Mammary epithelial cell (primary cell): ENCODE measurements at regions of chr10 and their contacts with region 1.

Region 1: DNA sequence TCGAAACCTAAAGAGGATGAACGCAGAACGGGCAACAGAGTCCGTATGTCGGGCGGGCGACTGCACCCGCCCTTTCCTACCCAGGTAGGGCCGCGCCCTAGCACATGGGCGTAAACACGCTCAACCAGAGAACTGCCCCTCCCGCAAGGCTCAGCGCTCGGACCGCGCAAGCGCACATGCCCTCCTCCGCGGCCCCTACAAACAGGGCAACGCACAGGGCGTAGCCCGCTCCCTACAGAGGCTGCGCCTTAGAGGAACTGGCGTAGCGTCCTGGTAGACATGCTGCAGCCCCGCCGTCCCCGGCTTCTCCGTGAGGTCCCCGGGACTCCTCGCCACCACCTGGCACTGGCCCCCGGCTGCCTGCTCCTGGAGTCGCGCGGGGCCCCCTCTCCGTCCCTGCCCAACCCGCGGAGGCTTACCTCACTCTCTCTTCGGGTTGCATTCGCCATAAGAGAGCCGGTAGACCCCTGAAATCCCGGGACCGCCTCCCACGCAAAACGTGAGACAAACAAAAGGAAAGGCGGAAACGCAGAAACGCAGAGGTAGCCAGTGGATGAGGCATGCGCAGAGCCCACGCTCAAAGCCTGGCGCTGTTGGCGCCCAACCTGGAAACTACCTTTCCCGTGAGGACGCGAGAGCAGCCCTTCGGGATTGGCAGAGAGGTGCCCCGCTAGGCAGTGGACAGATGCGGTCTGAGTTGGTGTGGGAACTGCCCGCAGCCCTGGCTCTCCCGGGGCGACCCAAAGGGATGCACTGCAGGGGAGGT is at the start of gene ZNF33B:
- DNase-seq: peak; percentile 97
- H3K4me3 ChIP-seq: peak within 1 kb of the TSS; percentile 72 to 87 (median 84)
- H3K27ac ChIP-seq: peak within 1 kb of the TSS; percentile 90
- H3K4me1 ChIP-seq: no peaks in the 10 kb centered on the region
- H3K27me3 ChIP-seq: no peaks in the 10 kb centered on the region
- CTCF ChIP-seq: no peak
- total RNA-seq, gene ZNF33B: 9.0 to 15.0 TPM

Region 2: DNA sequence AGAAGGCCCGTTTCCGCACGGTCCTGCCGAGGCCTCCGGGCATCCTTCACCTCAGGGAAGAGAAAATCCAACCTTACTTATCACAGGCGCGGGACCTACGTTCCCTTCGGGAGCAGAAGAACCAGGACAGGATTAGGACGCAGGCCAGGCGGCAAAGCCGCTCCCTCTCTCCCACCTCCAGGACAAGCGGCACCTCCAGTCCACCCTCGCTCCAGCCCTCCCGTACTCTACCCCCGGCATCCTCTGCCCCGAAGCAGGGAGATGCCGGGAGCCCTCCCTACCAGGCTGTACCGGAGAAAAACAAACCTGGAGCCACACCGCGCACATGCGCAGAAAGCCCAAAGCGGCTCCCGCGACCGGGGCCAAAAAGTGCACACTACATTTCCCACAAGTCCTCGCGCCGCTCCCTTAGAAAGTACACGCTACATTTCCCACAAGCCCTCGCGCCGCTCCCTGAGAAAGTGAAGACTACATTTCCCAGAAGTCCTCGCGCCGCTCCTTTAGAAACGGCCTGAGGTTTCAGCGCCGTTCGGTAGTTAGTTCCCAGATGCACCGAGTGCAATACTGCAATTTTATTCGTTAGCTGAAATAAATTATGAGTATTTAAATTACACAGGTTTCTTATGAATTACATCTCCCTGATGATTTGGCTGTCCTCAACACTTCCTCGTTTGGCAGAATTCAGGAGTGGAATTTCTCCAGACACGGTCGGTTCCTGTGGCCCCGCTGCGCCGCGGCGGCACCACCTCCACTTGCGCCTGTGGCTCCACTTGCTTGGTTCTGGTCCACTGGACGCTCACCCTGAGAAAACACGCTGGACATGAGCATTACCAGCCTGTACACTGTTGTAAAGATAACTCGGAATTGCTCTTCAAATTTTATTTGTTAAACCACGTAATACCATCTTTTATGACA is 85.5 kb before region 1 on chr10:
- CTCF ChIA-PET with region 1: no interaction called
- dilution Hi-C with region 1: no loop called
- in situ Hi-C with region 1: no loop called
- intact Hi-C with region 1: loop called (anchors 2 kb)
- DNase-seq: peak; percentile 96
- H3K4me3 ChIP-seq: peak overlapping the region; percentile 72 to 93 (median 82)
- H3K27ac ChIP-seq: peak overlapping the region; percentile 30
- H3K4me1 ChIP-seq: peaks cover 13% of the 10 kb centered on the region
- H3K27me3 ChIP-seq: no peaks in the 10 kb centered on the region
- CTCF ChIP-seq: no peak

Region 3: GRCh38 chr10:42782446-42783180 is 144.4 kb after region 1 on chr10 and contains the start of gene BMS1:
- CTCF ChIA-PET with region 1: no interaction called
- dilution Hi-C with region 1: no loop called
- in situ Hi-C with region 1: no loop called
- intact Hi-C with region 1: loop called (anchors 1 kb)
- DNase-seq: peak; percentile 94
- H3K4me3 ChIP-seq: peak within 1 kb of the TSS; percentile 55 to 84 (median 80)
- H3K27ac ChIP-seq: peak within 1 kb of the TSS; percentile 84
- H3K4me1 ChIP-seq: peaks cover 4% of the 10 kb centered on the region
- H3K27me3 ChIP-seq: no peaks in the 10 kb centered on the region
- CTCF ChIP-seq: no peak
- total RNA-seq, gene BMS1: 14.3 to 23.5 TPM